ENCODE measurements at regions of chr11 and their contacts with region 1.

Region 1: GRCh38 chr11:1889224-1890120 is 2.2 kb downstream of the PRR33 start:
- DNase-seq: peak; percentile 91
- H3K4me3 Mint-ChIP-seq: peak overlapping the region; percentile 70
- H3K27ac Mint-ChIP-seq: peak overlapping the region; percentile 84
- H3K4me1 Mint-ChIP-seq: peaks cover 28% of the 10 kb centered on the region
- H3K27me3 Mint-ChIP-seq: no peaks in the 10 kb centered on the region

Region 2: DNA sequence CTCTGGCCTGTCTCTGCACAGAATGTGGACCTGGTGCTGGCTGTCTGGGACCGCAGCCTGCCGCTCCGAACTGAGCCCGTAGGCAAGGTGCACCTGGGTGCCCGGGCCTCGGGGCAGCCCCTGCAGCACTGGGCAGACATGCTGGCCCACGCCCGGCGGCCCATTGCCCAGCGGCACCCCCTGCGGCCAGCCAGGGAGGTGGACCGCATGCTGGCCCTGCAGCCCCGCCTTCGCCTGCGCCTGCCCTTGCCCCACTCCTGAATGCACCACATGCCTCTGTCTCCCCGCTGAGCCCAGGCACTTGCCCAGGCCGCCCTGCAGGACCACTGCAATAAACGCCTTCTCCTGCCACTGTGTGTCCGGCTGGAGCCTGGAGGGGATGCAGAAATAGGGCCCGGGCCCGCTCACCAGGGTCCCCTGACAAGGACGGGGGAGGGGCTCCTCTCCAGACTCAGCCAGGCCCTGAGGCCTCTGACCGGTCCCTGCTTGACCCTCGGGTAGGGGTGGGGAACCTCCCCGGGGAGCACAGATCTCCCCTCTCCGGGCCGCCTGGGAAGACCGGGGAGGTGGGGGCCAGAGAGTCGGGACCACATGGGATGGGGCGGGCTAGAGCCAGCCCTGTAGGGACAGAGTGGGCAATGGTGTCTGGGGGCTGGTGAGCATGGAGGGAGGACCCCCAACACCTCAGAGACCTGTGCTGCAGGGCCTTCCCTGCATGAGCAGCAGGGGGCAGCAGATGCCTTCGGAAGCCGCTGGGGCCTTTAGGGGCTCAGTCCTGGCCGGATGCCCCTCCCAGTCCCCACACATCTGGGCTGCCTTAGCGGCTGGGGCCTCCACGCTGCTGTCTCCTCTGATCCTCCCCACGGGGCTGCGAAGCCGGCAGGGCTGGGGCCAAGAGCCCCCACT is 52.0 kb before region 1 on chr11:
- intact Hi-C with region 1: loop called (anchors 2 kb)
- DNase-seq: peak; percentile 93
- H3K4me3 Mint-ChIP-seq: no peak overlapping the region
- H3K27ac Mint-ChIP-seq: no peak overlapping the region
- H3K4me1 Mint-ChIP-seq: peaks cover 5% of the 10 kb centered on the region
- H3K27me3 Mint-ChIP-seq: peaks cover 3% of the 10 kb centered on the region

Region 3: GRCh38 chr11:1939006-1939625 is 49.6 kb after region 1 on chr11:
- intact Hi-C with region 1: loop called (anchors 1 kb)
- DNase-seq: peak; percentile 55
- H3K4me3 Mint-ChIP-seq: no peak overlapping the region
- H3K27ac Mint-ChIP-seq: no peak overlapping the region
- H3K4me1 Mint-ChIP-seq: peaks cover 5% of the 10 kb centered on the region
- H3K27me3 Mint-ChIP-seq: no peaks in the 10 kb centered on the region

Region 4: DNA sequence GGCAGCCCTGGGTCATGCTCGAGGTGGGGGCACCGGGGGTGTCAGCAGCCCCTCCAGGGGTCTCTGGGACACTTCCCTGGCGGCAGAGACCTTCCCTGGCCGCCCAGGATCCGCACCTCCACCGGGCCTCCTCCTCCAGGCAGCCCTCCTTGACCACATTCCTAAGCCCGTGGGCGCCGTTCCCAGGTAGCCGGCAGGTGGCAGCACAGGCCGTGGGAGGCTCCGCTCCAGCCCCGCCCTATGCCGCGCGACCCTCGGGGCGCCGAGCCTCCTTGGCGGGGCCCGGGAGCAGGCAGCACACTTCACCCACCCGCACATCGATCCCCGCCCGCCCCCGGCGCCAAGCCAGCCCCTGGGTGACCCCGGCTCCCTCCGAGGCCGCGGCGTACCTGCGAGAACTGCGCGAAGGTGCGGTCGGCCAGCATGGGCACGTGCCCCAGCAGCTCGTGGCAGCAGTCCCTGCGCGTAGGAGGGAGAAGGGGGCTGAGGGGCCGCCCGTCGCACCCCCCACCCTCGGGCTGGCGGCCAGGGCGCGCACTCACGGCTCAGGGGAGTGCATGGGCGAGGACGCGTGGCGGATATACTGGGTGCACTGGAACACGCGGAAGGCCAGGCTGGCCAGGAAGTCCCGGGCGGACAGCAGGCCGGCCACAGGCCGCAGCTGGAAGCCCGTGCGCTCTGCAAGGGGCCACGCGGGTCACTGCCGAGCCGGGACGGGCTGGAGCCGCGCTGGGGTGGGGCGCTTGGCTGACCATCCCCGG is 276.8 kb after region 1 on chr11:
- intact Hi-C with region 1: no loop called
- DNase-seq: peak; percentile 78
- H3K4me3 Mint-ChIP-seq: no peak overlapping the region
- H3K27ac Mint-ChIP-seq: no peak overlapping the region
- H3K4me1 Mint-ChIP-seq: no peaks in the 10 kb centered on the region
- H3K27me3 Mint-ChIP-seq: no peaks in the 10 kb centered on the region